Lower lobe of right lung (tissue), 2 donors: ENCODE measurements at regions of chr4 and their contacts with region 1.

Region 1: DNA sequence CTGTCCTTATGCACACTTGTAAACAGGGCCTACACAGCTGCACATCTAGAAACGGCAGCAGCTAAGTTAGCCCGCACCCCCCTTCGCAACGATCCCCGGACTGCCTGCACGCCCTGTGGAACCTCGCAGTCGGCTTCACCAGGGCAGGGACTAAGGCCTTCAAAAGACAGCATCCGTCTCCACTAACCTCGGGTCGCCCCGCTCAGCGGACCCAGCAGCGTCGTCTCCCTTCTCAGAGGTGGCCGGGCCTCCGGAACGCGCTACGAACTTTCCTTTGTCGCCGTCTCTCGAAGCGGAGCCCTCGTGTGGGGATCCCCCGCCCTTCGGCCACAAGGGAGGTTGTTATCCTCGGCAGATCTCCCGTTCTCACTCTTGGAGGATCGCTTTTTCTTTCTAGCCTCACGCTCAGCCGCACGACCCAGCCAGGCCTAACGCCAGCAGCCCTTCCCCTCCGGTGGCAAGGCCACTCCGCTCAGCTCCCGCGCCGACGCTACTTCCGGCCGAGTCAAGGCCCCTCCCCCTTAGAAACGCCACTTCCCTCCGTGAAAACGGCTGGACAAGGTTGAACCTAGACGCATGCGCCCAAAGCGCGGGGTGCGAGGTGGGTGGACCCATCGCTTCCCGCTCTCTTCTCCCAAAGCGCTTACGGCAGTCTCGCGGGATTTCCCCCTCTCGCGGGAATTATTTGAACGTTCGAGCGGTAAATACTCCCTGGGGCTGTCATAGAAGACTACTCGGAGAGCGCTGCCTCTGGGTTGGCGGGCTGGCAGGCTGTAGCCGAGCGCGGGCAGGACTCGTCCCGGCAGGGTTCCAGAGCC is at the starts of genes DCAF16 and NCAPG:
- DNase-seq: peak; percentile 99
- ATAC-seq: peak; percentile 100
- H3K4me3 ChIP-seq: peak within 1 kb of the TSS; percentile 79
- H3K27ac ChIP-seq: peak within 1 kb of the TSS; percentile 96
- H3K4me1 ChIP-seq: peaks cover 48% of the 10 kb centered on the region
- H3K27me3 ChIP-seq: no peaks in the 10 kb centered on the region
- CTCF ChIP-seq: no peak
- total RNA-seq, gene DCAF16: 26.1 TPM
- total RNA-seq, gene NCAPG: 2.2 TPM

Region 2: GRCh38 chr4:17934286-17934685 is 123.8 kb after region 1 on chr4:
- intact Hi-C with region 1: no loop called
- DNase-seq: no peak
- ATAC-seq: no peak
- H3K4me3 ChIP-seq: no peak overlapping the region
- H3K27ac ChIP-seq: no peak overlapping the region
- H3K4me1 ChIP-seq: no peaks in the 10 kb centered on the region
- H3K27me3 ChIP-seq: no peaks in the 10 kb centered on the region
- CTCF ChIP-seq: no peak

Region 3: GRCh38 chr4:18366892-18367291 is 556.4 kb after region 1 on chr4:
- intact Hi-C with region 1: loop called (anchors 10 kb)
- DNase-seq: no peak
- ATAC-seq: peak; percentile 46 to 53
- H3K4me3 ChIP-seq: no peak overlapping the region
- H3K27ac ChIP-seq: no peak overlapping the region
- H3K4me1 ChIP-seq: no peaks in the 10 kb centered on the region
- H3K27me3 ChIP-seq: no peaks in the 10 kb centered on the region
- CTCF ChIP-seq: peak; percentile 41

Region 4: DNA sequence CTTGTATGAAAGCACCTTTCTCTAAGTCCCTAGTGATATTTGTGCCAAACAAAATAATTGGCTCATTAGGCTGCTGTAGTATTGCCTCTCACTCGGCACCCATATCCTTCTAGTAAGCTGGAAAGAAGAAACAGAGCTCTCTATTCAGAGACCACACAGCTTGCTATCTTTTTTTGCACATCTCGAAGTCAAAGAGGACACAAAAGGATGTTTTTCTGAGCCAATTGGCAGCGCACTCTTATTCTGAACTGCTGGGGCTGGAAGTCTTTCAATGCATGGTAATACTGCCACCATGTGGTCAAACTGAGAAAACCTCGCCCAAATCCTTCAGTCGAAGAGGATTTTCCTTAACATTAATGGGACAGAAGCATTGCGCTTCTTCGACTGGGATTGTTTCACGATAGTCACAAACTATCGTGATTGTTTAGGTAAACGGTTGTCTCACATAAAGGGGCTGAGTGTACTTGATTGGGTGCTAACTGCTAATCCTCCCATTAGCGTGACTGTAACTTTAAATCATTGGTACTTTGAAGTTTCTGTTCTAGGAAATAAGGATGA is 783.1 kb after region 1 on chr4:
- intact Hi-C with region 1: loop called (anchors 10 kb)
- DNase-seq: no peak
- ATAC-seq: peak; percentile 67 to 69
- H3K4me3 ChIP-seq: no peak overlapping the region
- H3K27ac ChIP-seq: no peak overlapping the region
- H3K4me1 ChIP-seq: no peaks in the 10 kb centered on the region
- H3K27me3 ChIP-seq: no peaks in the 10 kb centered on the region
- CTCF ChIP-seq: peak; percentile 79